Panc1 (cell line): ENCODE measurements at regions of chr15 and their contacts with region 1.

Region 1: DNA sequence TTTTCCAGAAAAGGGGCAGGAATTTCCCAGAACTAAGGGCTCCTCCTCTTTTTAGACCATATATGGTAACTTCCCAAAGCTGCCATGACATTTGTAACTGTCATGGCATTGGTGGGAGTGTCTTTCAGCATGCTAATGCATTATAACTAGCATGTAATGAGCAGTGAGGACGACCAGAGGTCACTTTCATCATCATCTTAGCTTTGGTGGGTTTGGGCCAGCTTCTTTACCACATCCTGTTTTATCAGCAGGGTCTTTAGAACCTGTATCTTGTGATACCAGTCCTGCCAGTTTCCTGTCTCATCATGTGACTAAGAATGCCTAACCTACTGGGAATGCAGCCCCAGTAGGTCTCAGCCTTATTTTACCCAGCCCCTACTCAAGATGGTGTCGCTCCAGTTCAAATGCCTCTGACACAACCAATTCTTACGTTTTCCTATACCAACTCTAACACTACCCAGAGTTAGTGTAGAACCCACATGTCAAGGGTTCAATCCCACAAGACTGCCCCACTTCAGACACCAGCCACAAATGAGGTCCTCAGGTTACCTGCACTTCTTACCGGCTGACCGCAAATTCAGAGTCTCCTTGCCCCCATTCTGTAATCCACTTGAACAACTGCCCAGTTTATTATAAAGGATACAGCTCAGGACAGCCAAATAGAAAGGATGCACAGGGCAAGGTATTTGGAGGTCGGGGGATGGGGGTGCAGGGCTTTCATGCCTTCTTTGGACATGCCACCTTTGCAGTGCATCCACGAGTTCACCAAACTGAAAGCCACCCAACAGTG is 17.7 kb downstream of the FOXB1 start:
- DNase-seq: no peak
- ATAC-seq: no peak
- H3K4me3 ChIP-seq: no peak overlapping the region
- H3K27ac ChIP-seq: no peak overlapping the region
- H3K4me1 ChIP-seq: no peaks in the 10 kb centered on the region
- H3K27me3 ChIP-seq: no peaks in the 10 kb centered on the region
- CTCF ChIP-seq: no peak

Region 2: DNA sequence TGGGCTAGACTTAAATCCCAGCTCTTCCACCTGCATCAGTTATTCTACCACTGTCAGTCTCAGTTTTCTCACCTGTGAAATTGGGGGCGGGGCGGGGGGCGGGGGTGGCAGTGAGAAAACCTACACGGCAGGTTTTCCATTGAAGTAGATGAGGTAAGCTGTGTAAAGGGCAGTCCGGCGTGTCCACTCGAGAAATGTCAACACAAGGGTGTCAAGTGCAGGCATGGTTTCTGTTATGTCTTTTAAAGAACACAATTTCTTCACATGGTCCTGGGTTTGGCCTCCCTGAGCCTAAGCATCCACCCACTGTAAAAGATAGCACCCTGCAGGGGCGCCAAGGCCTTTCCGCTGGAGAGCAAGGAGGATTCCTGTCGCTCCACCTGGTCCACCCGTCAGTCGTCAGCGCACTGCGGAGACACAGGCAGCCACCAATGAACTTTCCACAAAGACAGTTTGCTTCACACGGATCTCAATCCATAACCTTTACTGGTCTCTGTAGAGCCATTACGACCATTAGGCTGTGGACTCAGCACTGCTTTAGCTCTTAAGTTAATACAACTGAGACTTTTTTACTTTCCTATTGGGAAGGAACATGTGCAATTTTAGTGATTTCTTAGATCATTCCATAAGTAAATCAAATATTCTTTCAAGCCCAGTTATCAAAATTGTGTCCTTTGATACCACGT is 117.2 kb before region 1 on chr15:
- CTCF ChIA-PET with region 1: no interaction called
- POLR2A ChIA-PET with region 1: interaction called, 12 read pairs
- in situ Hi-C with region 1: no loop called
- intact Hi-C with region 1: no loop called
- DNase-seq: no peak
- ATAC-seq: no peak
- H3K4me3 ChIP-seq: no peak overlapping the region
- H3K27ac ChIP-seq: no peak overlapping the region
- H3K4me1 ChIP-seq: no peaks in the 10 kb centered on the region
- H3K27me3 ChIP-seq: peaks cover 5% of the 10 kb centered on the region; the same call in 1 of the 2 replicates
- CTCF ChIP-seq: no peak

Region 3: DNA sequence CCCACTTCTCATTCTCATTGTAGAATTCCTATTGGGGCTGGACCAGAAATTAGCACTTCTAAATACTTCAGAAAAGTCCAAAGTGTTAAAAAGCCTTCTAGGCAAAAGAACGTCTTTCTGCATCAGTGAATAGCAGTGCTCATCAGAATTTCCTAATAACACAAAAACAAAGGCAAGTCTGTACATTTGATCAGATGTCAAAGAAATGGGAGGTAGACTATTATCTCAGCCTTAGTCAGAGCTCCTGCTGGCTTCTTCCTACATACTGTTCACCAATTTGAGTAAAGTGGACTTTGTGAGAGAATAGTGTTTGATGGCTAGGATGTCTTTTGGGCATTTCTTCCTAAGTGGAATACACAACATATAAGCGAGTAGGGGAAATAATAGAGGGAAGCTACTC is 31.0 kb after region 1 on chr15:
- CTCF ChIA-PET with region 1: no interaction called
- POLR2A ChIA-PET with region 1: interaction called, 13 read pairs
- in situ Hi-C with region 1: no loop called
- intact Hi-C with region 1: no loop called
- DNase-seq: no peak
- ATAC-seq: no peak
- H3K4me3 ChIP-seq: no peak overlapping the region
- H3K27ac ChIP-seq: no peak overlapping the region
- H3K4me1 ChIP-seq: no peaks in the 10 kb centered on the region
- H3K27me3 ChIP-seq: no peaks in the 10 kb centered on the region
- CTCF ChIP-seq: no peak

Region 4: GRCh38 chr15:60091165-60091564 is 69.4 kb after region 1 on chr15:
- CTCF ChIA-PET with region 1: no interaction called
- POLR2A ChIA-PET with region 1: no interaction called
- in situ Hi-C with region 1: no loop called
- intact Hi-C with region 1: no loop called
- DNase-seq: no peak
- ATAC-seq: peak; percentile 97
- H3K4me3 ChIP-seq: no peak overlapping the region
- H3K27ac ChIP-seq: peak overlapping the region; percentile 34; the same call in 1 of the 2 replicates
- H3K4me1 ChIP-seq: peaks cover 12% of the 10 kb centered on the region; the same call in 1 of the 2 replicates
- H3K27me3 ChIP-seq: no peaks in the 10 kb centered on the region; the same call in 1 of the 2 replicates
- CTCF ChIP-seq: no peak